CD8-positive, alpha-beta memory T cell (primary cell): ENCODE measurements at regions of chr13 and their contacts with region 1.

Region 1: GRCh38 chr13:110915057-110915873 is at the start of gene ANKRD10:
- DNase-seq: peak; percentile 91 to 93 (median 91)
- H3K4me3 ChIP-seq: peak within 1 kb of the TSS; percentile 60
- H3K4me3 Mint-ChIP-seq: peak within 1 kb of the TSS; percentile 86 to 97 (median 92)
- H3K27ac ChIP-seq: peak within 1 kb of the TSS; percentile 86
- H3K27ac Mint-ChIP-seq: peak within 1 kb of the TSS; percentile 90 to 98 (median 93)
- H3K4me1 ChIP-seq: peaks cover 26% of the 10 kb centered on the region
- H3K4me1 Mint-ChIP-seq: peaks cover 33 to 47% (median 45%) of the 10 kb centered on the region in 3 donors
- H3K27me3 ChIP-seq: no peaks in the 10 kb centered on the region
- H3K27me3 Mint-ChIP-seq: no peaks in the 10 kb centered on the region
- total RNA-seq, gene ANKRD10: 65.4 to 76.1 TPM

Region 2: GRCh38 chr13:110715395-110716235 is 199.7 kb before region 1 on chr13:
- CTCF ChIA-PET with region 1: interaction called, 9 read pairs
- POLR2A ChIA-PET with region 1: interaction called, 26 read pairs
- DNase-seq: peak; percentile 92 to 99 (median 99)
- H3K4me3 ChIP-seq: peak overlapping the region; percentile 96
- H3K4me3 Mint-ChIP-seq: peak overlapping the region; percentile 95 to 100 (median 99)
- H3K27ac ChIP-seq: peak overlapping the region; percentile 96
- H3K27ac Mint-ChIP-seq: peak overlapping the region; percentile 89 to 99 (median 98)
- H3K4me1 ChIP-seq: peaks cover 30% of the 10 kb centered on the region
- H3K4me1 Mint-ChIP-seq: peaks cover 28 to 41% (median 39%) of the 10 kb centered on the region in 3 donors
- H3K27me3 ChIP-seq: no peaks in the 10 kb centered on the region
- H3K27me3 Mint-ChIP-seq: peaks cover 0 to 11% of the 10 kb centered on the region in 2 donors